CD8-positive, alpha-beta T cell (primary cell): ENCODE measurements at regions of chr22 and their contacts with region 1.

Region 1: DNA sequence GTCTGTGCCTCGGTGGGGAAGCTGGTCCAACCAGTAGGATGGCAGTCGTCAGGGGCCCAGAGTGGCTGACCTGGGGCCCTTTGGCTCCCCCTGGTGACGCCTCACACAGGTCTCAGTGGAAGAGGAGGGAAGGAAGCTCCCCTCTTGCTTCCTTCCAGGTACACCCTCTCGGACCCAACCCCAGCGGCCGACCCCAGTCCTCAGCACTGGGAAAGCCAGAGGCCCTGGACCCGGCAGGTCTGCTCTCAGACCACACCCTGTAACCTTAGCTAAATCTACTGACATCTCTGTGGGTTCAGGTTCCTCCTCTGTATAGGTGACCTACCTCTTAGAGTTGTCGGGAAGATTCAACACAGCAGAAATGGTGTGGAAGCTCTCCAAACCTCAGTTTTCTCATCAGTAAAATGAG is 3.4 kb upstream of the SCUBE1 start:
- DNase-seq: peak; percentile 44 to 81 (median 68)
- ATAC-seq: peak; percentile 70
- H3K4me3 ChIP-seq: no peak overlapping the region
- H3K4me3 Mint-ChIP-seq: no peak overlapping the region
- H3K27ac ChIP-seq: no peak overlapping the region
- H3K27ac Mint-ChIP-seq: no peak overlapping the region
- H3K4me1 ChIP-seq: no peaks in the 10 kb centered on the region
- H3K4me1 Mint-ChIP-seq: peaks cover 9% of the 10 kb centered on the region
- H3K27me3 ChIP-seq: peaks cover 0 to 12% of the 10 kb centered on the region in 2 experiments
- H3K27me3 Mint-ChIP-seq: peaks cover 58% of the 10 kb centered on the region
- CTCF ChIP-seq: peak; percentile 69

Region 2: GRCh38 chr22:43230971-43231723 is 115.4 kb before region 1 on chr22:
- CTCF ChIA-PET with region 1: interaction called, 151 read pairs
- POLR2A ChIA-PET with region 1: interaction called, 4 read pairs
- intact Hi-C with region 1: loop called in 1 of 2 experiments (anchors 1 kb)
- DNase-seq: peak; percentile 44 to 79 (median 66)
- ATAC-seq: peak; percentile 84
- H3K4me3 ChIP-seq: no peak overlapping the region
- H3K4me3 Mint-ChIP-seq: no peak overlapping the region
- H3K27ac ChIP-seq: no peak overlapping the region
- H3K27ac Mint-ChIP-seq: no peak overlapping the region
- H3K4me1 ChIP-seq: no peaks in the 10 kb centered on the region
- H3K4me1 Mint-ChIP-seq: peaks cover 5% of the 10 kb centered on the region
- H3K27me3 ChIP-seq: no peaks in the 10 kb centered on the region
- H3K27me3 Mint-ChIP-seq: no peaks in the 10 kb centered on the region
- CTCF ChIP-seq: peak; percentile 99

Region 3: DNA sequence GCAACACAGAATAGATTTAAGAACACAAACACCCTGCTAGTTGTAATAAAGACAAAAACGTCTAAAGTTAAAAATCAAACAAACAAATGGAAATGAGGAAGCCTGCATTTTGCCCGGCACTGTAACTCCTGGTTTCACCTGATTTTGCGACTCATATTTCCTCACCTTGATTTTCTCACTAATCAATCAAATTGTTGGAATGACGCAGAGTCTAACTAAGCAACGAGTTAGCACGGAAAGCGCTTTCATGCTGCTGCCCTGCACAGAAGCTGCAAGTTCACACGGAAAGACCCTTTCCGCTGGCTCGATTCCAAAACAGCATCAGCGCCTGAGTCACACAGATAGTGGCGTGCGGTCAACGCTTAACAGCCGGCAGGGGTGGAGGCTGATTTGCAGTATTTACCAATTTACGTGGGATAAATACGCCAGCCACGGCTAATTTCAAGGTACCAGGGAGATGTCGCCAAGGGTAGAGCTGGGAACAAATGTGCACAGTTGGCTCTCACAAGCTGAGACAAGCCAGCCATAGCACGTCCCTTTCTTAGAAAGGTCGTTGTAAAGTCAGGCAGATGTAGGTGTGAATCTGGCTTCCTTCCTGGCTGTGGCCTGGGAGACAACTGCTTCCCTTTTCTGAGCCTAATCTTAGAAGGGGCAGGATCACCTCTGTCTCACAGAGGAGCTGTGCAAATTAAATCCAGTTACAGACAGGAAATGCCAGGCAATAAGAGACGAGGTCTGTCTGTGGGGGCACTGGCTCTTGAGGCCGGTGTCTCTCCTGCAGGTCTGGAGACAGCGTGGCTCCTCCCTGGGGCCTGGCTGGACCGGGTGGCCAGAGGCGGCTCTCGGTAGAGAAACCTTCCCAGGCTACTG is 82.6 kb before region 1 on chr22:
- CTCF ChIA-PET with region 1: interaction called, 12 read pairs
- POLR2A ChIA-PET with region 1: interaction called, 3 read pairs
- intact Hi-C with region 1: no loop called
- DNase-seq: peak; percentile 62 to 98 (median 85)
- ATAC-seq: peak; percentile 82
- H3K4me3 ChIP-seq: peak overlapping the region; percentile 23 to 25
- H3K4me3 Mint-ChIP-seq: peak overlapping the region; percentile 71
- H3K27ac ChIP-seq: peak overlapping the region; percentile 49 to 84
- H3K27ac Mint-ChIP-seq: peak overlapping the region; percentile 79
- H3K4me1 ChIP-seq: peaks cover 29% of the 10 kb centered on the region
- H3K4me1 Mint-ChIP-seq: peaks cover 26% of the 10 kb centered on the region
- H3K27me3 ChIP-seq: no peaks in the 10 kb centered on the region
- H3K27me3 Mint-ChIP-seq: no peaks in the 10 kb centered on the region
- CTCF ChIP-seq: no peak

Region 4: GRCh38 chr22:43330178-43331068 is 16.1 kb before region 1 on chr22:
- CTCF ChIA-PET with region 1: interaction called, 22 read pairs
- POLR2A ChIA-PET with region 1: no interaction called
- intact Hi-C with region 1: no loop called
- DNase-seq: no peak
- ATAC-seq: no peak
- H3K4me3 ChIP-seq: no peak overlapping the region
- H3K4me3 Mint-ChIP-seq: no peak overlapping the region
- H3K27ac ChIP-seq: no peak overlapping the region
- H3K27ac Mint-ChIP-seq: no peak overlapping the region
- H3K4me1 ChIP-seq: no peaks in the 10 kb centered on the region
- H3K4me1 Mint-ChIP-seq: no peaks in the 10 kb centered on the region
- H3K27me3 ChIP-seq: no peaks in the 10 kb centered on the region
- H3K27me3 Mint-ChIP-seq: no peaks in the 10 kb centered on the region
- CTCF ChIP-seq: no peak

Region 5: DNA sequence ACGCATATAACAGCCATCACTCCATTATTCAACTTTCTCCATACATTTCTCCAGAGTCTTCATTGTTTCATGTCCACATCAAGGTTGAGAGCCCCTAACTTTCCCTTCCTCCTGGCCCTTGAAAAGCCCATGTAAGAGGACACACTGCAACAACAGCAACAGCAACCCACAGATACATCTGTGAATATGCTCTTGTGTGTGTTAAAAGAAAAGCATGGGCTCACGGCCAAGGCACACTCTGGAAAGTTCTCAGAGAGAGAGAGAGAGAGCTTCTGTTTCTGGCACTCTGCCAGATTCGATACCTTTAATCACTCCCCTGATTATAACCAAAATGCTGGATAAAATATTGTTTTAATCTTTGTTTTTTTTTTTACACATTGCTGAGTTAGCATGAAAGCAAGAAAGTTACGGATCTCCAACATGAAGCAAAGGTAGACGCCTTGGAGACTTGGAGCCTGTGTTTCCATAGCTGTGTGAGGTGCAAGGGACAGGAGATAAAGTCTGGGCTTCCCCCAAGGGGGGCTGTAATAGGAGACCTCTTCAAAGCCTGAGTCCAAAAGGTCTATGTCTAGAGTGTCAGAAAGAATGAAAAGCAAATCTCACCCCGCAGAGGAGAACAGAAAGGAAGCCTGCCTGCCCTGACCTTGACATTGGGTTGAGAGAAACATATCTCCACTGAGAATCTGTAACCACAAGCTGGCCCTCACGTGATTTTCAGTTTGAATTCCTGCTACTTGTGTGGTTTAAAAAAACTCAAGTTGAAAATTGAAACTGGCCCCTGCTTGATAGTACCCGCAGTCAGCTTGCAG is 31.6 kb after region 1 on chr22:
- CTCF ChIA-PET with region 1: interaction called, 18 read pairs
- POLR2A ChIA-PET with region 1: no interaction called
- intact Hi-C with region 1: no loop called
- DNase-seq: peak in 2 of 9 experiments; percentile 18 to 40
- ATAC-seq: no peak
- H3K4me3 ChIP-seq: no peak overlapping the region
- H3K4me3 Mint-ChIP-seq: peak overlapping the region; percentile 23
- H3K27ac ChIP-seq: no peak overlapping the region
- H3K27ac Mint-ChIP-seq: no peak overlapping the region
- H3K4me1 ChIP-seq: peaks cover 22% of the 10 kb centered on the region
- H3K4me1 Mint-ChIP-seq: peaks cover 23% of the 10 kb centered on the region
- H3K27me3 ChIP-seq: peaks cover 10 to 24% of the 10 kb centered on the region in 2 experiments
- H3K27me3 Mint-ChIP-seq: peaks cover 33% of the 10 kb centered on the region
- CTCF ChIP-seq: no peak